IMR-90 (cell line): ENCODE measurements at regions of chr9 and their contacts with region 1.

Region 1: GRCh38 chr9:77614645-77615044 is 33.5 kb downstream of the GNA14 start:
- DNase-seq: no peak
- ATAC-seq: no peak
- H3K4me3 ChIP-seq: no peak overlapping the region
- H3K27ac ChIP-seq: no peak overlapping the region
- H3K4me1 ChIP-seq: no peaks in the 10 kb centered on the region
- H3K27me3 ChIP-seq: no peaks in the 10 kb centered on the region; the same call in 1 of the 2 replicates
- CTCF ChIP-seq: no peak
- POLR2A ChIP-seq: no peak
- RAD21 ChIP-seq: no peak

Region 2: GRCh38 chr9:77534376-77535057 is 80.1 kb before region 1 on chr9:
- CTCF ChIA-PET with region 1: no interaction called
- POLR2A ChIA-PET with region 1: no interaction called
- dilution Hi-C with region 1: no loop called
- in situ Hi-C with region 1: no loop called
- intact Hi-C with region 1: no loop called
- DNase-seq: no peak
- ATAC-seq: no peak
- H3K4me3 ChIP-seq: no peak overlapping the region
- H3K27ac ChIP-seq: no peak overlapping the region
- H3K4me1 ChIP-seq: no peaks in the 10 kb centered on the region
- H3K27me3 ChIP-seq: no peaks in the 10 kb centered on the region
- CTCF ChIP-seq: no peak
- POLR2A ChIP-seq: no peak
- RAD21 ChIP-seq: no peak

Region 3: DNA sequence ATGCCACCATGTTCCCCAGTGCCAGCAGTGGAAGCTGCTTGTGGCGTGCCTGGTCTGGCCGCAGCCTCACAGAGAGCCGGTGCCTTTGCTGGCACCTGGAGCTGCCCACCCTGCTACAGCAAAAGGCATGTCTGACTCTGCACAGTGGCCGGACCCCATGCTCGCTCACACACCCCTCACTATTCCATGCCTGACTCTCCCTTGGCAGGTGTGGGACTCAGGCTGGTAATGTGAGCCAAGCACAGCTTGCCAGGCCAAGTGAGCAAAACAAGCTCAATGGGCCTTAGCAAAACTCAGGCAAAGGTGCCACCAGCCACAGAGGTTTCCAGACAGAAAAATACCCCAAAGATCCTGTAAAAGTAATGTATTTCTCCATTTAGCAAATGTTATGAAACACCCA is 18.0 kb after region 1 on chr9:
- CTCF ChIA-PET with region 1: no interaction called
- POLR2A ChIA-PET with region 1: no interaction called
- dilution Hi-C with region 1: no loop called
- in situ Hi-C with region 1: no loop called
- intact Hi-C with region 1: loop called (anchors 2 kb)
- DNase-seq: no peak
- ATAC-seq: no peak
- H3K4me3 ChIP-seq: no peak overlapping the region
- H3K27ac ChIP-seq: no peak overlapping the region
- H3K4me1 ChIP-seq: no peaks in the 10 kb centered on the region
- H3K27me3 ChIP-seq: peaks cover 3% of the 10 kb centered on the region; the same call in 1 of the 2 replicates
- CTCF ChIP-seq: no peak
- POLR2A ChIP-seq: no peak
- RAD21 ChIP-seq: no peak